ENCODE measurements at regions of chr5 and their contacts with region 1.

Region 1: DNA sequence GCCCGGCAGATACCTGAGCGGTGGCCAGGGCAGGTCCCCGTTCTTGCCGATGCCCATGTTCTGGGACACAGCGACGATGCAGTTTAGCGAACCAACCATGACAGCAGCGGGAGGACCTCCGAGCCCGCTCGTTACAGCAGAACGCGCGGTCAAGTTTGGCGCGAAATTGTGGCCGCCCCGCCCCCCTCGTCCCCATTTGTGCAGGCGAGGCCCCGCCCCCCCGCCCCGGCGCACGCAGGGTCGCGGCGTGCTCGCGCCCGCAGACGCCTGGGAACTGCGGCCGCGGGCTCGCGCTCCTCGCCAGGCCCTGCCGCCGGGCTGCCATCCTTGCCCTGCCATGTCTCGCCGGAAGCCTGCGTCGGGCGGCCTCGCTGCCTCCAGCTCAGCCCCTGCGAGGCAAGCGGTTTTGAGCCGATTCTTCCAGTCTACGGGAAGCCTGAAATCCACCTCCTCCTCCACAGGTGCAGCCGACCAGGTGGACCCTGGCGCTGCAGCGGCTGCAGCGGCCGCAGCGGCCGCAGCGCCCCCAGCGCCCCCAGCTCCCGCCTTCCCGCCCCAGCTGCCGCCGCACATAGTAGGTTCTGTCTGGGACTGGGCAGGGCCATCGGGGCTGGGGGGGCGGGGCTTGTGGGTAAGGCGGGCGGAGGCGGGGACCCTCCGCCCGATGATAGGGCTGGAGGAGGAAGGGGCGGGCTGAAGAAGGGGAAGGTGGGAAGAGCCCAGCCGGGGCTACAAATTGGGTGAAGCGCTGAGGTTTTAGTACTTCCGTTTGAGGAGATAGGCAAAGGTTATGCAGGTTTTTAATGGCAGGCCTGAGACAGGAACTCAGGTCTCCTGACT is at the starts of genes DHFR and MSH3:
- DNase-seq: peak; percentile 95
- CTCF ChIP-seq: no peak

Region 2: GRCh38 chr5:80083101-80083890 is 571.3 kb before region 1 on chr5:
- in situ Hi-C with region 1: loop called (anchors 25 kb)
- DNase-seq: peak; percentile 80
- CTCF ChIP-seq: peak; percentile 72

Region 3: DNA sequence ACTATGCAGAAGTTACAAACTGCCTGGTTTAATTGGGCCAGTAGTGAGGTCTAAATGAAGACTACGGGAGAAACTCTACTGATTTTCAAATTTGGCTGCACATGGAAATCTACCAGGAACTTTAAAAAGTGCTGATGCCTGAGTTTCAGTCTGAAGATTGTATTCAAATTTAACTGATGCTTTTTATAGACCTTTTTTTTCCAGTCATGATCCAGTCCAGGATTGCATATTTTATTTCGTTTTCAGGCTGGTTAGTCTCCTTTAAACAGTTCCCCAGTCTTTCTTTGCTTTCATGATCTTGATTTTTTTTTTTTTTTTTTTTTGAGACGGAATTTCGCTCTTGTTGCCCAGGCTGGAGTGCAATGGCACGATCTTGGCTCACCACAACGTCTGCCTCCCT is 358.5 kb before region 1 on chr5:
- in situ Hi-C with region 1: no loop called
- DNase-seq: no peak
- CTCF ChIP-seq: no peak

Region 4: DNA sequence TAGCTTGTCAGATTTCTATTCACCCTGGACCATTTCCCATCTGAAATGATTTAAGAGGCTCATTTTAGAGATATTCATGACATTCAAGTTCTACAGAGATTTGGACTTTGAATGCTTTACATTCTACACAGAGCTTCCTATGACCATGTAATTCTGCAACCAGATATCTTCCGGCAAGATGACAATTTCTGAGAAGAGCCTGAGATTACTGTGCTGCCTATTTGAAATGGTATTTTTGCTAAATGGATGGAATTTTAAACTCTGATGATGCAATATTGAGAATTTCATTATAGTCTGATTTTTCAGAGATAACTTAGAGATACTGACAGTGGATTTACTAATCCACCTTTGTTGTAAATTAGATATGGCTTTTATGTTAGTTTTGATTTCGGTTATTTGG is 755.3 kb after region 1 on chr5:
- in situ Hi-C with region 1: no loop called
- DNase-seq: no peak
- CTCF ChIP-seq: no peak

Measured in GM13977 (cell line).